ENCODE measurements at regions of chr13 and their contacts with region 1.

Region 1: DNA sequence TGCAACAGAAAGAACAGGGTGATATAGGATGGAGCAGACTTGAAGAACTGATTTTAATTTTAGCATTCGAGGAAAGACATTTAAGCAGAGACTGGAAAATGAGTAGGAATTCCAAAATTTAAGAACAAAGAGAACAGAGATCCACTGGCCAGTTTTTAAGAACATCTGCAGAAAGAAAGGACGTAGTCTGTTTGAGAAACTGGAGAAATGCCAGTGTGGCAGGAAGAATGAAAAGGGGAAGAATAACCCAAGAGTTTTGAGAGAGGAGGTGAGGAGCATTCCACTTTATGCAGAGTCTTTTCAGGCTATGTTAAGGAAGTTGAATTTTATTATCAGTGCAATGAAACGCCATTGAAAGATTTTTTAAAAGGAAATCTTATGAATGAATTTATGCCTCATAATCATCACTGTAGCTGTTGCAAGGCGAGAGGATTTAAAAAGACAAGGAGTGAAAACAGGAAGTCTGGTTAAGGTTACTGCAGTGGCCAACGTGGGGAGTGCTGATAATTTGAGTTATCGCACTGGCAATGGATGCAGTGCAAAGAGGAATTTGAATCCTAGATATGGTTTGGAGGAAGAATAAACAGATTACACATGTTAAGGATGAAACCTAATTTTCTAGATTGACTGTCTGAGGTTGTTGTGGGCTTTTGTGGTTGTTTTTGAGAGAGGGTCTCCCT is 253.8 kb downstream of the DACH1 start:
- DNase-seq: no peak
- H3K4me3 Mint-ChIP-seq: no peak overlapping the region
- H3K27ac Mint-ChIP-seq: no peak overlapping the region
- H3K4me1 Mint-ChIP-seq: no peaks in the 10 kb centered on the region
- H3K27me3 Mint-ChIP-seq: no peaks in the 10 kb centered on the region

Region 2: DNA sequence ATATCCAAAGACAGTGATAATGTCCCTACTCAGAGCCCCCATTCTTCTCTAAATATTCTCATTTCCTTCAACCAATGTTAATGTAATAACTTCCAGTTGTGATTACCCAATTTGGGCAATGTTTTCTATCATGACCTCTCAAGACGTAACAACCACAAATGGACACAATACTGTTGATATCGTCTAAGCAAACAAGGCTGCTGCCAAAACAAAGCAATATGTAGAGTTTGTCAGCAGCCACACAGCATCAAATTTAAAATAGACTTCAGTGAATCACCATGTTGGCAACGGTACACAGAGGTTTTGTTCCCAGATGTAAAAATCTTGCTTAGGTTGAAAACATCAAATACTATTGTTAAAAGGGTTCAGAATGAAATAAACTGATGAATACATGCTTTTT is 48.7 kb after region 1 on chr13:
- intact Hi-C with region 1: loop called (anchors 2 kb)
- DNase-seq: no peak
- H3K4me3 Mint-ChIP-seq: no peak overlapping the region
- H3K27ac Mint-ChIP-seq: no peak overlapping the region
- H3K4me1 Mint-ChIP-seq: no peaks in the 10 kb centered on the region
- H3K27me3 Mint-ChIP-seq: no peaks in the 10 kb centered on the region